T-cell (primary cell): ENCODE measurements at regions of chr3 and their contacts with region 1.

Region 1: GRCh38 chr3:37218206-37218605 is 43.8 kb upstream of the LRRFIP2 start:
- DNase-seq: no peak
- ATAC-seq: no peak
- H3K4me3 ChIP-seq: no peak overlapping the region
- H3K4me3 Mint-ChIP-seq: no peak overlapping the region
- H3K27ac ChIP-seq: peak overlapping the region; percentile 67
- H3K27ac Mint-ChIP-seq: peak overlapping the region; percentile 35 to 40
- H3K4me1 ChIP-seq: peaks cover 10 to 47% of the 10 kb centered on the region in 2 experiments
- H3K4me1 Mint-ChIP-seq: peaks cover 19 to 60% (median 31%) of the 10 kb centered on the region in 3 donors
- H3K27me3 ChIP-seq: no peaks in the 10 kb centered on the region
- H3K27me3 Mint-ChIP-seq: no peaks in the 10 kb centered on the region

Region 2: DNA sequence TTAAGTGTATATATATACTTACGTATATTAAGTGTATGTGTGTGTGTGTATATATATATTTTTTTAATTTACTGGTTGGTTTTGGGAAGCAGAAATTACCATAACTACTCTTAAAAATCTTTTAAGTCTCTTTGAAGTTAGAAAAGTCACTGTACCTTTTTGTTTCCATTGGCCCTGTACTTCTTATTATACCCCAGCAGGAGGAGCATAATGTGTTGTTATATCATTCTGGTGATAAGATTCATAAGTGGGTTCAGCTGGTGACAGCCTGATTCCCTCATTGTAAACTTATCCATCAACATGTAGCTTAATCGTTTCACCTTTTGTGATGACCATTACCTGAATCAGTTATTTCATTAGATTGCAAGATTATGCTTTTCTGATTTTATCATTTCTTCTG is 194.1 kb before region 1 on chr3:
- CTCF ChIA-PET with region 1: interaction called, 6 to 10 read pairs
- POLR2A ChIA-PET with region 1: no interaction called
- DNase-seq: peak in 1 of 35 experiments; percentile 24
- ATAC-seq: no peak
- H3K4me3 ChIP-seq: no peak overlapping the region
- H3K4me3 Mint-ChIP-seq: no peak overlapping the region
- H3K27ac ChIP-seq: no peak overlapping the region
- H3K27ac Mint-ChIP-seq: no peak overlapping the region
- H3K4me1 ChIP-seq: no peaks in the 10 kb centered on the region
- H3K4me1 Mint-ChIP-seq: peaks cover 0 to 16% (median 0%) of the 10 kb centered on the region in 3 donors
- H3K27me3 ChIP-seq: no peaks in the 10 kb centered on the region
- H3K27me3 Mint-ChIP-seq: no peaks in the 10 kb centered on the region

Region 3: GRCh38 chr3:37249294-37249693 is 31.1 kb after region 1 on chr3:
- CTCF ChIA-PET with region 1: interaction called, 3 to 10 read pairs
- POLR2A ChIA-PET with region 1: no interaction called
- DNase-seq: no peak
- ATAC-seq: no peak
- H3K4me3 ChIP-seq: no peak overlapping the region
- H3K4me3 Mint-ChIP-seq: peak overlapping the region in 1 of 3 donors; percentile 20
- H3K27ac ChIP-seq: no peak overlapping the region
- H3K27ac Mint-ChIP-seq: peak overlapping the region in 1 of 2 donors; percentile 5
- H3K4me1 ChIP-seq: peaks cover 15 to 16% of the 10 kb centered on the region in 2 experiments
- H3K4me1 Mint-ChIP-seq: peaks cover 65 to 78% (median 74%) of the 10 kb centered on the region in 3 donors
- H3K27me3 ChIP-seq: no peaks in the 10 kb centered on the region
- H3K27me3 Mint-ChIP-seq: no peaks in the 10 kb centered on the region

Region 4: GRCh38 chr3:37546905-37547304 is 328.7 kb after region 1 on chr3:
- CTCF ChIA-PET with region 1: no interaction called
- POLR2A ChIA-PET with region 1: no interaction called
- DNase-seq: no peak
- ATAC-seq: no peak
- H3K4me3 ChIP-seq: no peak overlapping the region
- H3K4me3 Mint-ChIP-seq: no peak overlapping the region
- H3K27ac ChIP-seq: no peak overlapping the region
- H3K27ac Mint-ChIP-seq: no peak overlapping the region
- H3K4me1 ChIP-seq: no peaks in the 10 kb centered on the region
- H3K4me1 Mint-ChIP-seq: no peaks in the 10 kb centered on the region
- H3K27me3 ChIP-seq: peaks cover 0 to 9% of the 10 kb centered on the region in 2 experiments
- H3K27me3 Mint-ChIP-seq: no peaks in the 10 kb centered on the region